ENCODE measurements at regions of chr4 and their contacts with region 1.

Region 1: DNA sequence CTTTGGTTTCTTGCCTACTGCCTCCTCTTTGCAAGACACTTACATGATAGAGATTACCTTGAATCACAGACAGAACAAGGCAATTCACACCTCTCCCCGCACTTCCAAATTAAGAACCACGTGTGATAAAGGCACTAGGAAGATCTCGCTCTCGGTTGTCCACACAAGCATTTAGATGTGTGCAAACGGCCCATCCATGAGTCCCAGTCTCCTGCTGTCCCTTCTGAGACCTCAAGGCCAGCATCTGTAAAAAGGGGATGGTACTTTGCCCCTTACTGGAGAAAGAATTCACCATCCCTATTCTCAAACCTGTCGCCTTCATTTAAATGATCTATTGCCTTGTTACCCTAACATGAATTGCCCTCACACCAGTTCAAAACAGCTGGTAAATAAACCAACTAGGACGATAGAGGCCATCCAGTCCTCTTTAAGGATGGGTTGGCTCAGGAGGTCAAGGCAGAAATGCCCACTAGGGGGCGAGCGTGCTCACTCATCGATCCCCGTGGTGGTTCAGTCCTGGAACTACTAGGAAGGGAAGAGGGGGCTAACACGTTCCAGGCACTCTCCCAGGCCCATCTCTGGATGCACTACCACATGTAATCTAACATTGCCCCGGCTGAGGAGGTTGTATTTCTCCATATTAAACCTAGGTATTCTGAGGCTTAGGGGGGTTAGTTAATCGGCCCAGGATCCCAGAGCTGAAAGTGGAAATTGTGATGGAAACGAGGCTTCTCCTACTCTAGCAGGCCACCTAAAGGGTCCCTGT is 95.8 kb downstream of the DHX15 start:
- DNase-seq: peak; percentile 70
- H3K4me3 ChIP-seq: no peak overlapping the region
- H3K27ac ChIP-seq: no peak overlapping the region
- H3K4me1 ChIP-seq: no peaks in the 10 kb centered on the region
- H3K27me3 ChIP-seq: no peaks in the 10 kb centered on the region
- CTCF ChIP-seq: peak; percentile 93

Region 2: DNA sequence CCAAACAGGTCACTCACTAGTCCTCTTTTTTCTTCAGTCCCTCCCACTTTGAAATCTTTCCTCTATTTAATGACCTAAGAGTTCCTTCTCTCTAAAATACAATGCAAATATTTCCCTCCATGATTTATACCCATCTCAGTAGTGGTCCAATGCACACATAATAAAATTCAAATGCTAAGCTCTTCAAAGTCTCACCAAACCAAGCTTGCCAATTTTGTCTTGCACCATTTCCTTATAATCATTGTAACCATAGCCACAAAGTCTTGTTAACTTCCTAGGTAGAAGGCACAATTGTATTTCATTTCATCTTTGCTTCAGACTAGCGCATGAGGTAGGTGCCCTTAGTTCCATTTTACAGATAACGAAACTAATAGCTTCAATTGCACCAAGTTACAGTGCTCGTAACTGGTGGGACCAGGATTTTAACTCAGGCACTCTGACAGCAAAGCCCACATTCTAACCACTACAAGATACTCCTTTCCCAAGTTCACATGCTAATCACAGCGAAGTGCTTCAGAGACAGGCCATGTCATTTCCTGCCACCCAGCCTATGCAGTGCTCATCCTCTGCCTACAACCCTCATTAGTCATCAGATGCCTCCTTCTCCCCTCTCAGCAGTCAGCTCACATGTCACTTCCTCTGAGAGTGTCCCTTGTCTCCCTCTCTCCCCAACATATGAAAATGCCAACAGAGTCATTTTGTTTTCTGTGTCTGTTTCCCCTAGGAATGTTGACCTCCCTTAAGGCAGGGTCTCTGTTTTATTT is 531.8 kb before region 1 on chr4:
- CTCF ChIA-PET with region 1: no interaction called
- POLR2A ChIA-PET with region 1: no interaction called
- intact Hi-C with region 1: no loop called
- DNase-seq: no peak
- H3K4me3 ChIP-seq: no peak overlapping the region
- H3K27ac ChIP-seq: no peak overlapping the region
- H3K4me1 ChIP-seq: no peaks in the 10 kb centered on the region
- H3K27me3 ChIP-seq: no peaks in the 10 kb centered on the region
- CTCF ChIP-seq: no peak

Region 3: DNA sequence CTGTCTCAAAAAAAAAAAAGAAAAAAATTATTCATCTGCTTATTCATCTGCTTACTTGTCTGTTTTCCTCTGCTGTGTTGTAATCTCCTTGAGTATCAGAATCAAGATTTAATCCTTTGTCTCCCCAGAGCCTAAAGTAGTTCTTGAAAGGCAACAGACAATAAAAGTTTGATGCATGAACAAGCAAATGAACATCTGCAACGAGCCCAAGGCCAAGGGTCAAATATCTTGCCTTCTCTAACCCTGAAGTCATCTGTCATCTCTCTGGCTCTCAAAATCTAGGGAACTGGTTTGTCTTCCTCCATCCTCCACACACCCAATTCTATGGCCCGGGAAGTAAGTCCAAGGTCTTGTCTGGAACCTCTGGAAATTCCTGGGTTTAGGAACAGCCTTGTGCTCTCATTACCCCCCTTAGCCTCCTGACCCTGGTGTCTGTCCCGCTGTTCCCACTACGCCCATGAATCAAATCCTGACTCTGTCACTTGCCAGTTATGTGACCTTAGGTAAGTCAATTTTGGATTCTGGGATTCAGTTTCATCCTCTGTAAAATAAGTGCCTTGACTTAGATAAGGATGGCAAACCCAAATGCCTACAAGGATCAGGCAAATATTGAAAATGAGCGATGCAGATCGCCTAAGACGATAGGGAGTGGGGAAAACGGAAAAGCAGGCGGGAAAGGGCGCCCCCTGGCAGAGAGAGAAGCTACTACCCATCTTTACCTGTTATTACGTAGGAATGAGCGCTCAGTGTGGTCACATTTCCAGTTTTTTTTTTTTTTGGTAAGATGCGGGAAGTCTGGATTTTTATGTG is 198.5 kb after region 1 on chr4:
- CTCF ChIA-PET with region 1: no interaction called
- POLR2A ChIA-PET with region 1: no interaction called
- intact Hi-C with region 1: loop called (anchors 2 kb)
- DNase-seq: peak; percentile 11
- H3K4me3 ChIP-seq: no peak overlapping the region
- H3K27ac ChIP-seq: no peak overlapping the region
- H3K4me1 ChIP-seq: no peaks in the 10 kb centered on the region
- H3K27me3 ChIP-seq: no peaks in the 10 kb centered on the region
- CTCF ChIP-seq: peak; percentile 75

Region 4: DNA sequence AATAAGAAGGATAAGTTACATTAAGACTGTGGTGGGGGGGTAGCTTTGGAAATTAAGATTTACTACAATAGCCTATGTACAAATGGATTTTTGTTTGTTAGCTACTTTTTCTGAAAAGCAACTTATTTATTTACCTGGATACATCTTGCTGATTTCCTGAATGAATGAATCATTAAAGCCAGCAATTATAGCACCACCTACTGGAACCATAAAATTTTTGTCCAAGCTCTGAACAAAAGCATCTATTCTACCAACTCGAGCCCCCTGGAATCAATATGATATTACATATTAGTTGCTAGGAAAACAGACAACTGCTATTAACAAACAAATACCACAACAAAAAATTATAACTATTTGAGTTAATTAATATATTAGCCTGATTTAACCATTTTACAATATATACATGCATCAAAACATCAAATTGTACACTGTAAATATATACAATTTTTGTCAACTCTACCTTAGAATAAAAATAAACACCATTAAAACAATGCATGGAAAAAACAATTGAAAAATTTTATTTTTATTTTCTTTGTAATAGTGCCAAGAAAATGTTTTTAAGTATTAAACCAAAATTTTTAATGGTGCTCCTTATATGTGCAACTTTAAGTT is 656.4 kb after region 1 on chr4:
- CTCF ChIA-PET with region 1: no interaction called
- POLR2A ChIA-PET with region 1: no interaction called
- intact Hi-C with region 1: loop called (anchors 10 kb)
- DNase-seq: peak; percentile 45
- H3K4me3 ChIP-seq: no peak overlapping the region
- H3K27ac ChIP-seq: no peak overlapping the region
- H3K4me1 ChIP-seq: no peaks in the 10 kb centered on the region
- H3K27me3 ChIP-seq: no peaks in the 10 kb centered on the region
- CTCF ChIP-seq: peak; percentile 77